ENCODE measurements at regions of chrX and their contacts with region 1.

Region 1: GRCh38 chrX:1453951-1454785 is 1.5 kb upstream of the ASMTL start:
- DNase-seq: peak; percentile 82 to 94 (median 84)
- ATAC-seq: peak; percentile 3 to 35 (median 22)
- H3K4me3 ChIP-seq: peak overlapping the region in 11 of 12 donors; percentile 28 to 72 (median 58)
- H3K27ac ChIP-seq: peak overlapping the region in 10 of 12 donors; percentile 34 to 95 (median 62)
- H3K4me1 ChIP-seq: peaks cover 0 to 25% (median 11%) of the 10 kb centered on the region in 12 donors
- H3K27me3 ChIP-seq: no peaks in the 10 kb centered on the region
- CTCF ChIP-seq: peak; percentile 91 to 100 (median 97)
- POLR2A ChIP-seq: no peak

Region 2: DNA sequence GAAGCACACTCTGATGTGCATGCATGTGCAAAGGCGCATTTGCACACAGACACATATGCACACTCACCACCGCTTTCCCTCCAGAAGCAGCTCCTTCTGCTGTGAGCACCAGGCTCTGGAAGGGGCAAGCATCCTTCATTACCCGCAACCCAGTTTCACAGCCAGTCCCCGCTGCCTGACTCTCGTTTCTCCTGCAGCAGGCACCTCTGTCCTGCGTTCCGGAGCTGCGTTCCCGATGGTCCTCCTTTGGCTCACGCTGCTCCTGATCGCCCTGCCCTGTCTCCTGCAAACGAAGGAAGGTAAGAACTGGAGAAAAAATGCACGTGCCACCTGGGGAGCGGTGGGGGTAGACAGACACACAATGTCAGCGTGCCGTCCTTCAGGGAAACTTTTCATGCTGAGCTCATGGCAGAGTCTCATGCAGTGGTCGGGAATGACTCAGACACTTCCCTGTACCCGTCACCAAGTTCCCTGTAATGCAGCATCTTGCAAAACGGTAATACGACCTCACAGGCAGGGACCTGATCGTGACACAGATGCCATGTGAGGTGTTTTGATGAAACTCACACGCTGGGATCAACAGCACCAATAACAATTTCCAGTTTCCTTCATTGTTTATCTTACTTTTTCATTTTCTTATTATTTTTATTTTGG is 112.5 kb before region 1 on chrX:
- intact Hi-C with region 1: loop called in 1 of 10 experiments (anchors 5 kb)
- DNase-seq: peak in 1 of 5 donors; percentile 18
- ATAC-seq: no peak
- H3K4me3 ChIP-seq: no peak overlapping the region
- H3K27ac ChIP-seq: no peak overlapping the region
- H3K4me1 ChIP-seq: peaks cover 0 to 10% (median 1%) of the 10 kb centered on the region in 12 donors
- H3K27me3 ChIP-seq: no peaks in the 10 kb centered on the region
- CTCF ChIP-seq: no peak
- POLR2A ChIP-seq: no peak

Region 3: DNA sequence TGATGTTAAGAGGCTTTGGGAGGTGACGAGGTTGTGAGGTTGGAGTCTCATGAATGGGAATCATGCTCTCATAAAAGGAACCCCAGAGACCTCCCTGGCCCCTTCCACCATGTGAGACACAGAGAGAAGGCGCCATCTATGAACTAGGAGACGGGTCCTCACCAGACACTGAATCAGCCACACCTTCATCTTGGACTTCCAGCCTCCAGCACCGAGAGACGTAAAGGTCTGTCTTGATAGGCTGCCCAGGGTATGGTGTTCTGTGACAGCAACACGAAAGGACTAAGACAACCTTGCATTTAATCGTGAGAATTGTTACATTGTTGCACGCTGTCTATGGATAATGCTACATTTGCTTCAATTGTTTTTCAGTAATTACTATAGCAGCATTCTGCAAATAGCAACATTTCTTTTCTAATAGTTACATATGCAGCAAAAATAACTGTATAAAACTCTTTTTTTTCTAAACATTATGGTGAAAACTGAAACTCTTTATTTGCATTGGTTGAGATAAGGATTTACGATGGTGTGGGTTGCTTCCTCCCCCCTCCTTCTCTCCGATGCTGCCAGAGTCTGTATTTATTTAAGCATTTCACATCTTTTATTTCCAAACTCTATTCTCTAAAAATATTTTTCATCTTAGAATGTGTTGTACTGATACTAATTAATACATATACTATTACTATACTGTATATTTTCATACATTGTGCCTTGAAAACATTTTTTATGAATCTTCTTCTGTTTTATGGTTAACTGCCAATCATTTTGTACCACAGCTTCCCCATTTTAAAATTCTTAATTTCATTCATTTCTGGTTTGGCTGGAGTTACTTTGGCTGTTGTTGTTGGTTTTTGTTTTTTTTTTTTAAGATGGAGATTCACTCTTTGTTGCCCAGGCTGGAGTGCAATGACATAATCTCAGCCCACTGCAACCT is 110.8 kb after region 1 on chrX:
- intact Hi-C with region 1: loop called in 1 of 10 experiments (anchors 5 kb)
- DNase-seq: no peak
- ATAC-seq: no peak
- H3K4me3 ChIP-seq: no peak overlapping the region
- H3K27ac ChIP-seq: no peak overlapping the region
- H3K4me1 ChIP-seq: peaks cover 0 to 8% (median 0%) of the 10 kb centered on the region in 12 donors
- H3K27me3 ChIP-seq: no peaks in the 10 kb centered on the region
- CTCF ChIP-seq: no peak
- POLR2A ChIP-seq: no peak

Region 4: DNA sequence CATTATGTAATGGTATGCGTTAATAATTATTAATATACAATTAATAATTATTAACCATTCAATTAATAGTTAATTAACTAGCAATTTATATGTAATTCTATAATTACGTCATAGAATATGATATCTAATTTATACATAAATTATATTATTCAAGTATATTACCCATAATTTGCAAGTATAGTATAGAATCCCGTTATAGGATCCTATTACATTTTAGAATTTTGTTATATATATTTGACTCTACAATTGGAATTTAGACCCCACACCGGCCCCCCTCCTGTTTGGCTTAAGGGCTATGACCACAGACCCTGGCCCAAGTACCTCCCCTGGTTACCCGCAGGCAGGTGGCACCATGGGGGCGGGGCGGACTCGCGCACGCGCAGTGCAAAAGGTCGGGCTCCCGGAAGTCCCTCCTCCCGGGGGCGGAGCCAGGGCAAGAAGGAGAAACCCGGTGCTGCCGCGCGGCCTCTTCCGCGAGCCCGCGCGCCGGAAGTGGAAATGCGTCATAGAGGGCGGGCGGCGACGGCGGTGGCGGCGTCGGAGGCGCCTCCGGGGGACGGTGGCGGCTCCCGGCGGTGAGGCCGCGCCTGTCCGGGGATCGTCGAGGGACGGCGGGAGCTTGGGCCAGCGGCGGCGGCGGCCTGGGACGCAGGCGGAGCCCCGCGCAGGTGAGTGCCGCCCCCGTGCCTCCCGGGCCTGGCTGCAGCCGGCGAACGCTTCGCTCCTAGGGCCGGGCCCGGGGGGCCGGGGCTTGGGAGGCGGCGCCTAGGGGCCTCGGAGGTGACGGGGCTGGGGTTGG is 137.1 kb after region 1 on chrX and contains the start of gene AKAP17A:
- intact Hi-C with region 1: loop called in 4 of 10 experiments (anchors 2 to 5 kb)
- DNase-seq: peak; percentile 95 to 98 (median 96)
- ATAC-seq: peak; percentile 89 to 98 (median 96)
- H3K4me3 ChIP-seq: peak within 1 kb of the TSS; percentile 67 to 99 (median 80)
- H3K27ac ChIP-seq: peak within 1 kb of the TSS; percentile 75 to 97 (median 86)
- H3K4me1 ChIP-seq: peaks cover 0 to 30% (median 17%) of the 10 kb centered on the region in 12 donors
- H3K27me3 ChIP-seq: no peaks in the 10 kb centered on the region
- CTCF ChIP-seq: peak in 3 of 12 donors; percentile 15 to 43 (median 35)
- POLR2A ChIP-seq: peak; percentile 41 to 90
- total RNA-seq, gene AKAP17A: 12.5 to 20.4 (median 15.6) TPM

Region 5: DNA sequence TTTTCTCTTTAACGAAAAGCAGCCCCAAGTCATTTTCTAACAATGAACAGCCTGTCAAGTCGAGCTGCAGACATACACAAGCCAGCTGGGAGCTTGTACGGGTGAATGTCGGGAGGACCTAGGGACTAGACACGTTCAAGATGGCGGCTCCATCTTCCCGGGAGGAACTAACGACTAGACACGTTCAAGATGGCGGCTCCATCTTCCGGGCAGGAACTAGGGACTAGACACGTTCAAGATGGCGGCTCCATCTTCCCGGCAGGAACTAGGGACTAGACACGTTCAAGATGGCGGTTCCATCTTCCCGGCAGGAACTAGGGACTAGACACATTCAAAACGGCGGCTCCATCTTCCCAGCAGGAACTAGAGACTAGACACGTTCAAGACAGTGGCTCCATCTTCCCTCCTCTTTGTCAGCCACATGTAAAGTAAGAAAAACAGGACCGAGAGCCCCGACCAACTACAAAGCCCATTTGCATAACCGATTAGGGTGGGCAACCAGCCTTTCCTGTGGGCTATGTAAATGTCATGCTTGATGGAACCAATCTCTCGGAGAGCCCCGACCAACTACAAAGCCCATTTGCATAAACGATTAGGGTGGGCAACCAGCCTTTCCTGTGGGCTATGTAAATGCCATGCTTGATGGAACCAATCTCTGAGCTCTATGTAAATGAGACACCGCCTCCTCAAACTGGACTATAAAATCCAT is 871.1 kb after region 1 on chrX:
- intact Hi-C with region 1: loop called in 1 of 10 experiments (anchors 10 kb)
- DNase-seq: peak; percentile 32 to 91 (median 64)
- ATAC-seq: peak; percentile 28 to 65 (median 49)
- H3K4me3 ChIP-seq: peak overlapping the region in 11 of 12 donors; percentile 10 to 58 (median 36)
- H3K27ac ChIP-seq: peak overlapping the region in 8 of 12 donors; percentile 1 to 84 (median 53)
- H3K4me1 ChIP-seq: peaks cover 0 to 14% (median 0%) of the 10 kb centered on the region in 12 donors
- H3K27me3 ChIP-seq: no peaks in the 10 kb centered on the region
- CTCF ChIP-seq: no peak
- POLR2A ChIP-seq: no peak

Region 6: GRCh38 chrX:2614911-2615310 is 1160.7 kb after region 1 on chrX:
- intact Hi-C with region 1: loop called in 2 of 10 experiments (anchors 10 kb)
- DNase-seq: peak in 1 of 5 donors; percentile 12
- ATAC-seq: peak; percentile 64 to 90 (median 80)
- H3K4me3 ChIP-seq: no peak overlapping the region
- H3K27ac ChIP-seq: peak overlapping the region in 3 of 12 donors; percentile 31 to 73 (median 38)
- H3K4me1 ChIP-seq: peaks cover 0 to 21% (median 0%) of the 10 kb centered on the region in 12 donors
- H3K27me3 ChIP-seq: no peaks in the 10 kb centered on the region
- CTCF ChIP-seq: peak in 6 of 12 donors; percentile 11 to 59 (median 47)
- POLR2A ChIP-seq: no peak